Sigmoid colon (tissue), 7 donors: ENCODE measurements at regions of chr12 and their contacts with region 1.

Region 1: GRCh38 chr12:130351326-130351725 is 13.6 kb downstream of the PIWIL1 start:
- DNase-seq: no peak
- H3K4me3 ChIP-seq: no peak overlapping the region
- H3K27ac ChIP-seq: no peak overlapping the region
- H3K4me1 ChIP-seq: no peaks in the 10 kb centered on the region
- H3K27me3 ChIP-seq: peaks cover 0 to 51% (median 0%) of the 10 kb centered on the region in 3 donors
- CTCF ChIP-seq: no peak
- EP300 ChIP-seq: no peak
- POLR2A ChIP-seq: no peak

Region 2: DNA sequence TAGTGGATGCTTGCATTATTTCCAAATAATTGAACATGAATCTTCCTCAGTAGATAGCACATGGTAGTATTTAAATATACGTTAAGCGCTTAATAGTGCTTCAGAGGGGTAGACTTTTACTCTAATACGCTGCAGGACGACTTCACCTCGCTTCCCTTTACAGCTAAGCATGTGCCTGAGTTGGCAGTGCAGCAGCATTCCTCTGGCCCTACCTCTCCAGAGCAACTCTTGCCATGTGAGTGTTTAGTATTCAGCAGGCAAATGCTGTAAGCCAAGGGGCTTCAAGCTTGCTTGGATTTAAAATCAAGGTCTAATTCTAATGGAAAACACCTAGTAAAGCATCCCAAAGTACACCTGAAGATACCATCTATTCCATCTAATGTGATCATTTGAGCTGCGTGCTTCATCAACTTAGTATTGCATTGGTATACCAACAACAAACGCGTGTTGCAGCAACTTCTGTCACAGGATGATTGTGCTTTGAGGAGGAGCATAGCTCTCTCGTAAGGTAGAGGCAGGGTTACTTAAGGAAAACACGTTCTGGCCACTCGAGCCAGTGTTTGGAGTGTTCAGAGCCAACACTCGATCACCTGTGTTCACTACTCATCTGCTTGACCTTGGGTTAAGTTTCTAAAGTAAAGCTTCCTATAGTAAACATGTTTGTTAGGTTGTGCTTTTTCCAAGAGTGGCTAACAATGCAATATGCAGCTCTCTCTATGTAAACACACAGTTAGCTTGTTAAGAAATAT is 46.9 kb after region 1 on chr12:
- intact Hi-C with region 1: loop called (anchors 2 kb)
- DNase-seq: no peak
- H3K4me3 ChIP-seq: no peak overlapping the region
- H3K27ac ChIP-seq: no peak overlapping the region
- H3K4me1 ChIP-seq: no peaks in the 10 kb centered on the region
- H3K27me3 ChIP-seq: peaks cover 0 to 15% (median 0%) of the 10 kb centered on the region in 3 donors
- CTCF ChIP-seq: no peak
- EP300 ChIP-seq: no peak
- POLR2A ChIP-seq: no peak